Posterior vena cava (tissue), 2 donors: ENCODE measurements at regions of chr9 and their contacts with region 1.

Region 1: GRCh38 chr9:87725900-87726709 is at the start of gene CTSL:
- DNase-seq: peak; percentile 99
- total RNA-seq, gene CTSL: 176 to 195 TPM

Region 2: GRCh38 chr9:86983260-86984255 is 742.5 kb before region 1 on chr9:
- intact Hi-C with region 1: loop called in 1 of 2 experiments (anchors 5 kb)
- DNase-seq: peak; percentile 81

Region 3: DNA sequence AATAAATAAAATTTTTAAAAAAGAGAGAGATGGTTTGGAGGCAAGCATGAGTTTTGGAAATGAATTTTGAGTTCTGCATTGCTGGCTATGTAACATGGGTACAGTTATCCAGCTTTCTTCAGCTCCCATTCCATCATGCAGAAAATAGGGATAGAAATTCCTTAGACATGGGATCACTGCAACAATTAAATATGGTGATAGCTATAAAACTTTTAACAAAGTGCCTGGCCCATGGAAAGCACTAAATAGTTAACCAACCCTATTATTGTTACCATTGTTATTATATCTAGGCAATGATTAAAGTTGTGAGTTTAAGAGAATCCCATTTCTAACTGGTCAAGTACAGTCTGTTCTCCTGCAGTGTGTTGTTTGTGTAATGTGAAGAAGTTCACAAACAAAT is 663.4 kb before region 1 on chr9:
- intact Hi-C with region 1: no loop called
- DNase-seq: no peak